A673 (cell line): ENCODE measurements at regions of chr5 and their contacts with region 1.

Region 1: DNA sequence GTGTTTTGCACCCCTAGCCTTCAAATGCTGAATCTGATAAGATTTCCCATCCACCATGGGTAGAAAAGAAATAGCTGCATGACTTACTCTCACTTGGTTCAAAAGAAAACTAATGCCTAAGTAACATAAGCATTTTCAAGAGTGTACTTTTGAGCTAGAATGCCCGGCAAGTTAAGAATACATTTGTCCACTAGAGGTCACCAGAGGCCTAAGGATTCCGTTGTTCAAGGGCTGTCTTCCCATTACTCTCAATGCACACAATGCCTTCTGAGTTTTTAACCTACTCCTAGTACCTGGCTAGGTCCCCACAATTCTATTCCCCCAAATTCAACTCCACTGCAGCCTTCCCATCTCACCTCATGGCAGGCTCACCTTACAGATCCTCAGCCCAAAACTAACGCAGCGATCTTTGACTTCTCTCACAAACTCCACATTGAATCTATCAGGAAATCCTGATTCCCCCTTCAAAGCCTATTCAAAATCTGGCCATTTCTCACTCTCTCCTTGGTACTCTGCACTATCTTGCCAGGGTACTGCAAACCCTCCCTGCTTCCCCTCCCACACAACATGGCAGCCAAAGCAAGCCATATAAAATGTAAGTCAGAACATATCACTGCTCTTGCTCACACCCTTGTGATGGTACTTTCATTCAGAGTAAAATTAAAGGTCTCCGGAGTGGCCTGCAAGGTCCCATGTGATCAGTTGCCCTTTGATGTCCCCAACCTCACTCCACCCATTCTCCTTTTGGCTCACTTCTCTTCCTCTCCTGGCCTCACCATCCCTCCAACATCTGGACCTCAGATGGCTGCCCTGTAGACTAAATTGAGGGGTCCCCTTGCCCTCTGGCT is 13.4 kb downstream of the OXCT1 start:
- DNase-seq: peak; percentile 77
- H3K4me3 ChIP-seq: no peak overlapping the region
- H3K27ac ChIP-seq: peak overlapping the region; percentile 11
- H3K4me1 ChIP-seq: no peaks in the 10 kb centered on the region
- H3K27me3 ChIP-seq: no peaks in the 10 kb centered on the region
- CTCF ChIP-seq: peak; percentile 74

Region 2: DNA sequence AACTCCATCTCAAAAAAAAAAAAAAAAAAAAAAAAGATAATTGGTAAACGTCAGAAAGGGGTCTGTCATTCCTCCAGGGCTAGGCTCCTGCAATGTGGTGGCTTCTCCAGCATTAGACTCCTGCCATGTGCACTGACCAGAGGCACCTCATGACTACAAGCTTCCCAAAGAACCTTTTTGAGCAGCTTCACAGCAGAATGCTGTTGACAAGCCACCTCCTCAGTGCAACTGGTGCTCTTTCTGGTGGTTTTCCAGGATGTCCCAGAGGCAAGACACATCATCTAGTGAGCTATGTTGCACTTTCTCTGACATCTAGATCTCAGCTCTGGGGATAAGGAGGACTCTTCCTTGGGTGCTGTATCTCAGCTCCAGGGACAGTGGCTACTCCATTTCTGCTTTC is 1033.4 kb before region 1 on chr5:
- CTCF ChIA-PET with region 1: no interaction called
- POLR2A ChIA-PET with region 1: no interaction called
- intact Hi-C with region 1: no loop called
- DNase-seq: no peak
- H3K4me3 ChIP-seq: no peak overlapping the region
- H3K27ac ChIP-seq: no peak overlapping the region
- H3K4me1 ChIP-seq: no peaks in the 10 kb centered on the region
- H3K27me3 ChIP-seq: no peaks in the 10 kb centered on the region
- CTCF ChIP-seq: no peak

Region 3: DNA sequence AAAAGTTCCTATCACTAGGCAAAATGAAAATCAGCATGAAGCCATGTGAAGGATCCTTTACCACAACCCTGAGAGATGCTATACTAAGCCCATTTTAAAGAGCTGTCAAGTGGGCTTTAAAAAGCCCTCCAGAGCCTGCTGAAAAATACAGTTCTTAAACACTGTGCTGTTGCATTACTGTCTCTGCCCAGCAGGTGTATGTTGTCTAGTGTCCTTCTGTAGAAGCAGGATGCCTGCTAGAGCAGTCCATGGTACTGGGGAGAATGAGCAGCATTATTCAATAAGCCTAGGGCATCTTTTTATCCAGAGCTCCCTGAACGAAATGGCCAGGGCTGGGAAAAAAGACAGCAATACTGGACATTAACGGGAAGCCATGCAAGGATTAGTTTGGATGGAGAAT is 220.3 kb before region 1 on chr5:
- CTCF ChIA-PET with region 1: no interaction called
- POLR2A ChIA-PET with region 1: no interaction called
- intact Hi-C with region 1: no loop called
- DNase-seq: peak; percentile 63
- H3K4me3 ChIP-seq: no peak overlapping the region
- H3K27ac ChIP-seq: no peak overlapping the region
- H3K4me1 ChIP-seq: no peaks in the 10 kb centered on the region
- H3K27me3 ChIP-seq: no peaks in the 10 kb centered on the region
- CTCF ChIP-seq: peak; percentile 53

Region 4: DNA sequence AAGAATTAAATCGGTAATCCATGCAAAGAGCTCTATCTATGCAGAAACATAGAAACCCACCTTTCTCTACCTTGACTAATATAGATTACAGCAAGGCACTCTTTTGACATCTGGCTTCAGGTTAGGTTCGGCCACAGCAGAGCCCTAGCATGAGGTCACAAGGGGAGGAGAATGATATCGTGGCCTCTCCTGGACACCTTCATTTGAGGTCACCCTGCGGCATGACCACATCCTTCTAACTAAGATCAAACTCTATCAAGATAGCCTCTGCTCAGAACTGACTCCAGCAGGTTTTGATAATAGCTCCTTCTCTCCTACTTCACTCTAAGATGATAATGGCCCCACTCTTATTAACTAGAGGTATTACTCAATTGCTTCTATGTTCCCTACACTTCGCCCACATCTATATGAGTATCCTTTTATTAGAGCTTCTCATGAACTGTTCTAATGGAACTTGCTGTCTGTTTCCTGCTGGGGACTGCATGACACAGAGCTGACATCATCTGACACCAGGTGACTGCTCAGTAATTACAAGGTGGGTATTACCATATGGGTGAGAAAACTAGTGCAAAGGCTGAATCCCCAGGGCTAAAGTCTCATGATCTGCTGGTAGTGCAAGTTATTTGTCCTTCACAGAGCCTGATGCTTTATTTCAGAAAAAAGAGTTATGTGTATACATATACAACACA is 200.4 kb before region 1 on chr5:
- CTCF ChIA-PET with region 1: no interaction called
- POLR2A ChIA-PET with region 1: no interaction called
- intact Hi-C with region 1: no loop called
- DNase-seq: no peak
- H3K4me3 ChIP-seq: no peak overlapping the region
- H3K27ac ChIP-seq: no peak overlapping the region
- H3K4me1 ChIP-seq: no peaks in the 10 kb centered on the region
- H3K27me3 ChIP-seq: no peaks in the 10 kb centered on the region
- CTCF ChIP-seq: no peak

Region 5: DNA sequence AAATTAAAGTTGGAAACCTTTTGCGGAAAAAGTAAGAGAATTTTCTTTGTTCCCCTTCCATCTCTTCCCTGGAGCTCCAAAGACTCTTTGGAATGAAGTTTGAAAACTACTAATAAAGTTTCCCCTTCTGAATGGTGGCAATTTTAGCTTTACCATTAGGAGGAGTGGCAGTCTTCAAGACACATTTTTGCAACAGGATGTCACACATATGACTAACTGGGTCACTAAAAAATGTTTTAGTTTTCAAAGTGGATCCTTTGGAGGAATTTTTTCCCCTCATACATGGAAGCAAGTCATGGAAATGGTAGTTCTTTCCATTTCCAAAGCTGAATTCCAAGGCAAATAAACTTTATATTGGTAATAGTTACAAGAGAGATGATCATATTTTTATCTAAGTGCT is 83.8 kb after region 1 on chr5:
- CTCF ChIA-PET with region 1: no interaction called
- POLR2A ChIA-PET with region 1: interaction called, 13 read pairs
- intact Hi-C with region 1: no loop called
- DNase-seq: no peak
- H3K4me3 ChIP-seq: no peak overlapping the region
- H3K27ac ChIP-seq: no peak overlapping the region
- H3K4me1 ChIP-seq: no peaks in the 10 kb centered on the region
- H3K27me3 ChIP-seq: no peaks in the 10 kb centered on the region
- CTCF ChIP-seq: no peak

Region 6: DNA sequence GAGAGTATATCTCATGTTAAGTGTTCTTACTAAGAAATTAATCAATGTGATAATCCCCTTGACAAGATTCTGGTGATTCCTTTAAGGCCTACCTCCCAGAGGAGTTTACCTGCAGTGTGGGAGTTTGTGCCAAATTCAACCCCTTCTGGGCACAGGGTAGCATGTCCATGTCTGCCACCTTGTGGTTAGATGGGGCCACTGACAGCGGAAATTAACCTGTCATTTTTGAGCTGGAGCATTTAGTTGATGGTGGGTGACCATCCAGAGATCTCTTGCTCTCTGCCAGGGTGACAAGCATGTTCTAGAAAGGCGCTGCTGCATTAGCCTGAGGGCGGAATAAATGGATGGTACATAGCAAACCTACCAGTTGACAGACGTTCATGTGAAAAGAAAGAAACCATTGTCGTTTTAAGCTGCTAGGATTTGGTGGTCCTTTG is 200.4 kb after region 1 on chr5:
- CTCF ChIA-PET with region 1: interaction called, 27 read pairs
- POLR2A ChIA-PET with region 1: interaction called, 3 read pairs
- intact Hi-C with region 1: loop called (anchors 1 kb)
- DNase-seq: peak; percentile 58
- H3K4me3 ChIP-seq: no peak overlapping the region
- H3K27ac ChIP-seq: no peak overlapping the region
- H3K4me1 ChIP-seq: no peaks in the 10 kb centered on the region
- H3K27me3 ChIP-seq: peaks cover 11% of the 10 kb centered on the region
- CTCF ChIP-seq: peak; percentile 82

Region 7: DNA sequence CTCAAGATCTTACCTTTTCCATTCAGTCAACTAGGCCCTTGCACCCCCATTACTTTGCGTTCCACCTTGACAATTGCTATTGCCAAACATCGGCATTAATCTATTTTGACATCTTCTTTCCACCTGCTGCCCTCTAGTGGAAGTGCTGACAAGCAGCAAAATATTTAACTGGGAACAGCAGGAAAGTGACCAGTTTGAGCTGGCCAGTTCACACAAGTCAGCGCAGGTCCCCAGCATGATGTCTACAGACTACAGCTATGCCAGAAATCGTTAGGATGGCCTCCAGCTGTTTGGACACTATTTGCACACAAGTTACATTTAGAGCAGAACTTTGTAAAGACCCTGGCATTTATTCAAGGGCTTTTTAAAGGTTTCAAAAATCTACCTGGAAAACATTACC is 726.5 kb after region 1 on chr5:
- CTCF ChIA-PET with region 1: no interaction called
- POLR2A ChIA-PET with region 1: no interaction called
- intact Hi-C with region 1: loop called (anchors 5 kb)
- DNase-seq: peak; percentile 45
- H3K4me3 ChIP-seq: no peak overlapping the region
- H3K27ac ChIP-seq: no peak overlapping the region
- H3K4me1 ChIP-seq: no peaks in the 10 kb centered on the region
- H3K27me3 ChIP-seq: peaks cover 34% of the 10 kb centered on the region
- CTCF ChIP-seq: peak; percentile 89

Region 8: DNA sequence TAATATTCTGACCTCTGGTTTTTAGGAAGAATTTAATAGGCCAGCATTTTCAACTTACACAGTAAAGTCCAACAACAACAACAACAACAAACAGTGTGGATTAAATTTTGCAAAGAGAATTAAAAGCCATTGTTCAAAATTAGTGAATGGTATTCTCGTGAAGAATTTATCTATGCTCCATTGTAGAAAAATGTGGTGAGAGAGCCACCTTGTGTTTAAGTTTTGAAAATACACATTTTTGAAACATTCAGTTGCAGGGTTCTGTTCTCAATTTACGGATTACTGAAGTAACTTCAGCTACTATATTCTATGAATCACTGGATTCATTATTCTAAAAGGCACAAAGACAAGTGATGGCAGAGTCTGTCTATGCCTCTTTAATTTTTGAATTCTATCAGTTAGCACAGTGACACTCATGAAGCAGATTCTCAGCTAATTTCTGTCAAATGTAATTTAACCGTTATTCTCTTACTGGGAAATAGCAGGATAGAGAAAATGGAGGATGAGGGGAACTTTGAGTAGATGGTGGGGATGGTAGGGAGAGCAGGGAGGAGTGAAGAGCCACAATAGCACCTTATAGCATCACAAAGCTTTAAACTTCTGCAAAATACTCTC is 910.7 kb after region 1 on chr5:
- CTCF ChIA-PET with region 1: interaction called, 6 read pairs
- POLR2A ChIA-PET with region 1: no interaction called
- intact Hi-C with region 1: loop called (anchors 5 kb)
- DNase-seq: peak; percentile 50
- H3K4me3 ChIP-seq: no peak overlapping the region
- H3K27ac ChIP-seq: no peak overlapping the region
- H3K4me1 ChIP-seq: peaks cover 1% of the 10 kb centered on the region
- H3K27me3 ChIP-seq: no peaks in the 10 kb centered on the region
- CTCF ChIP-seq: peak; percentile 65